Activated CD4-positive, alpha-beta memory T cell treated with anti-CD3 and anti-CD28 coated beads, Interleukin-2, amount 10 ng/mL, durations not matched to agents 7 days and 5 days (primary cell): ENCODE measurements at regions of chr6 and their contacts with region 1.

Region 1: GRCh38 chr6:39114704-39115599 is at the start of gene SAYSD1:
- DNase-seq: peak; percentile 94
- H3K4me3 Mint-ChIP-seq: peak within 1 kb of the TSS; percentile 89
- H3K27ac Mint-ChIP-seq: peak within 1 kb of the TSS; percentile 94
- H3K4me1 Mint-ChIP-seq: peaks cover 52% of the 10 kb centered on the region
- H3K27me3 Mint-ChIP-seq: no peaks in the 10 kb centered on the region
- total RNA-seq, gene SAYSD1: 10.4 to 11.0 TPM

Region 2: DNA sequence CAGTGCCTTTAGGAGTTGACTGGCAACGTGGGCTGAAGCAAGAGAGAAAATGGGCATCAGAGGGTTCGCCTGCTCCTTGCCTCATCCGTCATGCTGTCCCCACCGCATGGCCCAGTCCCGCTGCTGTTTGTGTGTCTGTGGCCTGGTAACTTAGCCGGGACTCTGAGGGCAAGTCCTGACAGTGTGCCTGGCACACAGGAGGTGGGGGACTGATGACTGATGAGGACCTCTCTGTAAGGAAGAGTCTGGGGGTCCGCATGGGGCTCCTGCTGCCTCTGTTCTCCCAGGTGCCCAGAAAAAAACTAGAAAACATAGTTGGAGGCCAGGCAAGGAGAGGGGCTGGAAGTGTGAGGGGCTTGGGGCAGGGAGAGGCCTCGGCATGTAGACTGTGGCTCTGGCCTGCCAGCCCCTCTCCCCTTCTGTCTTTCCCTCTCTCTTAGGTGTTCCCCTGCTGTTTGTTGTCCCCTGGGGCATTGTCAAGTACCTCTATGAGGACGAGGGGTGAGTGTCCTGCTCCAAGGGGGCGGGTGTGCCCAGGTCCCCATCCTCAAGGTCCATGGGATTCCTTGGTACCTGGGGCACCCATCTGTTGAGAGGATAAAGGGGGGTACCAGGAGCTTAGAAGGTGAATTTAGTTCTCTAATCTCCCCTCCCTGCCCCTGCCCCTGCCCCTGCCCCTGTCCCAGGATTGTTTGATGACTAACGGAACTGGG is 36.9 kb before region 1 on chr6:
- CTCF ChIA-PET with region 1: no interaction called
- POLR2A ChIA-PET with region 1: no interaction called
- DNase-seq: peak; percentile 10
- H3K4me3 Mint-ChIP-seq: no peak overlapping the region
- H3K27ac Mint-ChIP-seq: no peak overlapping the region
- H3K4me1 Mint-ChIP-seq: no peaks in the 10 kb centered on the region
- H3K27me3 Mint-ChIP-seq: peaks cover 6% of the 10 kb centered on the region

Region 3: DNA sequence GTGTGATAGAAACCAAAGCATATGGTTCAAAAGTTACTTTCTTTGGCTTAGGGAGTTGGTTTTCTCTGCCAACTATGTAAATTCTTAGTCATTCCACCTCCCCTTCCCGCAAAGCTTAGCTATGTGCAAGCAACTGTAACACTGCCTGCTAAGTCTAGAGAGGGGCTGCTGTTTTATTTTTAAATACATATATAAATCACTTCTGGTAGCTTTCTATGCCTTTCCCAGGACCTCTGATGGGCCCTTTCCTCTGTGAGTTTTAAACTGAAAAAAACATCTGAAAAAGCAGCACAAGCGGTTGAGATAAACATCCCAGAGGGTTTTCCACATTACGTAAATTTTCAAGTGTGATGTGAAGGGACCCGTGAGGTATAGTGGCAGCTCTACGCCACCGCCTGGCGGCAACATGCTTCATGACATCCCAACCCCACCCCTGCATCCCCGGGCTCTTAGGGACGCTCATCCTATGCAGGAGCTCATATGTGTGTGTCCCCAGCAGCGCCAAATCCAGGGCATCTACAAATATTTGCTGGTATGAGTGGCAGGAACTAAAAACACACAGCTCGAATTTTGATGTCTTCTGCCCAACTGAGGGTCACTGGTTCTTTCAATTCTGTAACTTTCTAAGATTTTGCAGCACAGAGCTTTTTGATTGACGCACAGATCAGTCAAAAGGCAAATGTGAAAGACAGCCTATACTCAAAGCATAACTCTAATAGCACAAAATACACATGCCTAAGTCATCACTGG is 12.7 kb before region 1 on chr6:
- CTCF ChIA-PET with region 1: interaction called, 12 read pairs
- POLR2A ChIA-PET with region 1: interaction called, 9 read pairs
- DNase-seq: no peak
- H3K4me3 Mint-ChIP-seq: no peak overlapping the region
- H3K27ac Mint-ChIP-seq: no peak overlapping the region
- H3K4me1 Mint-ChIP-seq: peaks cover 3% of the 10 kb centered on the region
- H3K27me3 Mint-ChIP-seq: no peaks in the 10 kb centered on the region

Region 4: GRCh38 chr6:39228992-39229767 is 114.2 kb after region 1 on chr6 and contains the start of gene KCNK5:
- CTCF ChIA-PET with region 1: no interaction called
- POLR2A ChIA-PET with region 1: interaction called, 17 read pairs
- DNase-seq: peak; percentile 90
- H3K4me3 Mint-ChIP-seq: peak within 1 kb of the TSS; percentile 68
- H3K27ac Mint-ChIP-seq: peak within 1 kb of the TSS; percentile 96
- H3K4me1 Mint-ChIP-seq: peaks cover 43% of the 10 kb centered on the region
- H3K27me3 Mint-ChIP-seq: no peaks in the 10 kb centered on the region
- total RNA-seq, gene KCNK5: 8.6 to 9.2 TPM